H1 (cell line): ENCODE measurements at regions of chr9 and their contacts with region 1.

Region 1: DNA sequence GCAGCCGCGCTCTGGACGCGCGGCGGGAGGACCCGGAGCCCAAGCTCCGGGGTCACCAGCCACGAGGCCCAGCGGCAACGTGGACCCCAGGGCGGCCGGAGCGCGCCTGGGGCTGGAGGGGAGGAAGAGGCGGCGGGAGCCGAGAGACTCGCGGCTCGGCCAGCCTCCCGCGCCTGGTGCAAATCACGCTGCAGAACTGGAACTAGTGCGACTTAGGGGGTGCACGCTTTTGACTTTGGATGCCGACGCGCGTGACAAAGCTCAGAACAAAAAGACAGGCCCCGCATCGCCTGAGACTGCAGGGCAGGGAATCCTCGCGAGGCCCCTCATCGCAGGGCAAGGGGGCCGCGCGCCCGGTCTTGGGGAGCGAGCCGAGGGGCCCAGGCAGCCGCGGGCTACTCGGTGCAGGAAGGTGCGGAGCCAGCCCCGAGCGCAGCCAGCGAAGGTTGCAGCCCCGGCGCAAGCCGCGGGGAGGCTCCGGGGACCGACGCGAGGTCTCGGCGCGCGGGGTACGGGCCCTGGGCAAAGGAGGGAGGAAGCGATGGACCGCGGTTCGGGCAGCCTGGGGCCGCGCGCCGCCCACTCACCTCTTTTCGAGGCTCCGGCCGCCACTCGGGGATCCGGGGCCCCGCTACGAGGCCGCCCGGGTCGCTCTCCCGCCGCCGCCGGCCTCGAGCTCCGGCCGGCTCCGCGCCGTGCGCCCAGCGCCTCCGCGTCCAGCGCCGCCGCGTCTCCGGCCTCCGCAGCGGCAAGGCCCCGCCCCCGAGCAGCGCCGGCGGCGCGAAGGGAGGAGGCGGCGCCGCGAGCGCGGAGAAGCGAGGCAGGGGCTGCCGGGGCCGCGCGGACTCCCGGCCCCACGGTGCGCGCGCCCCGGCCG is at the start of gene GOLM1:
- DNase-seq: peak in 1 of 2 experiments; percentile 74
- H3K4me3 ChIP-seq: peak within 1 kb of the TSS; percentile 51 to 97 (median 78)
- H3K27ac ChIP-seq: no peak within 1 kb of the TSS
- H3K4me1 ChIP-seq: peaks cover 0 to 10% (median 1%) of the 10 kb centered on the region in 4 experiments; a peak in 5 of 7 replicates
- H3K27me3 ChIP-seq: peaks cover 0 to 14% (median 6%) of the 10 kb centered on the region in 4 experiments; a peak in 5 of 7 replicates
- CTCF ChIP-seq: peak in 2 of 3 experiments; percentile 14 to 35; a peak in 3 of 4 replicates
- EP300 ChIP-seq: no peak
- POLR2A ChIP-seq: peak; percentile 62
- RAD21 ChIP-seq: peak; percentile 20 to 47; a peak in 3 of 4 replicates
- total RNA-seq, gene GOLM1: 88.9 and 89.4 TPM in 2 replicates

Region 2: GRCh38 chr9:86126998-86127972 is 28.2 kb after region 1 on chr9:
- CTCF ChIA-PET with region 1: interaction called, 3 read pairs
- POLR2A ChIA-PET with region 1: interaction called, 11 read pairs
- DNase-seq: peak; percentile 68 to 77
- H3K4me3 ChIP-seq: no peak overlapping the region
- H3K27ac ChIP-seq: peak overlapping the region; percentile 35
- H3K4me1 ChIP-seq: peaks cover 5 to 21% (median 11%) of the 10 kb centered on the region in 4 experiments; a peak in 6 of 7 replicates
- H3K27me3 ChIP-seq: no peaks in the 10 kb centered on the region; a peak in 2 of 7 replicates
- CTCF ChIP-seq: no peak
- EP300 ChIP-seq: no peak
- POLR2A ChIP-seq: no peak
- RAD21 ChIP-seq: 0 out of 4 replicates have a peak, but pooled peaks of 1 of the 2 experiments have one; percentile 1